MCF 10A (cell line): ENCODE measurements at regions of chr1 and their contacts with region 1.

Region 1: GRCh38 chr1:178542560-178543356 is 29.8 kb downstream of the TEX35 start:
- DNase-seq: peak; percentile 89
- H3K4me3 Mint-ChIP-seq: peak overlapping the region; percentile 95
- H3K27ac Mint-ChIP-seq: peak overlapping the region; percentile 80
- H3K4me1 Mint-ChIP-seq: peaks cover 35% of the 10 kb centered on the region
- H3K27me3 Mint-ChIP-seq: no peaks in the 10 kb centered on the region
- CTCF ChIP-seq: peak; percentile 100

Region 2: GRCh38 chr1:178513278-178514022 is 29.3 kb before region 1 on chr1:
- CTCF ChIA-PET with region 1: interaction called, 10 read pairs
- POLR2A ChIA-PET with region 1: interaction called, 3 read pairs
- intact Hi-C with region 1: no loop called
- DNase-seq: no peak
- H3K4me3 Mint-ChIP-seq: no peak overlapping the region
- H3K27ac Mint-ChIP-seq: no peak overlapping the region
- H3K4me1 Mint-ChIP-seq: no peaks in the 10 kb centered on the region
- H3K27me3 Mint-ChIP-seq: no peaks in the 10 kb centered on the region
- CTCF ChIP-seq: no peak

Region 3: GRCh38 chr1:178560871-178561376 is 18.2 kb after region 1 on chr1:
- CTCF ChIA-PET with region 1: interaction called, 19 read pairs
- POLR2A ChIA-PET with region 1: interaction called, 5 read pairs
- intact Hi-C with region 1: no loop called
- DNase-seq: no peak
- H3K4me3 Mint-ChIP-seq: no peak overlapping the region
- H3K27ac Mint-ChIP-seq: no peak overlapping the region
- H3K4me1 Mint-ChIP-seq: no peaks in the 10 kb centered on the region
- H3K27me3 Mint-ChIP-seq: no peaks in the 10 kb centered on the region
- CTCF ChIP-seq: no peak

Region 4: DNA sequence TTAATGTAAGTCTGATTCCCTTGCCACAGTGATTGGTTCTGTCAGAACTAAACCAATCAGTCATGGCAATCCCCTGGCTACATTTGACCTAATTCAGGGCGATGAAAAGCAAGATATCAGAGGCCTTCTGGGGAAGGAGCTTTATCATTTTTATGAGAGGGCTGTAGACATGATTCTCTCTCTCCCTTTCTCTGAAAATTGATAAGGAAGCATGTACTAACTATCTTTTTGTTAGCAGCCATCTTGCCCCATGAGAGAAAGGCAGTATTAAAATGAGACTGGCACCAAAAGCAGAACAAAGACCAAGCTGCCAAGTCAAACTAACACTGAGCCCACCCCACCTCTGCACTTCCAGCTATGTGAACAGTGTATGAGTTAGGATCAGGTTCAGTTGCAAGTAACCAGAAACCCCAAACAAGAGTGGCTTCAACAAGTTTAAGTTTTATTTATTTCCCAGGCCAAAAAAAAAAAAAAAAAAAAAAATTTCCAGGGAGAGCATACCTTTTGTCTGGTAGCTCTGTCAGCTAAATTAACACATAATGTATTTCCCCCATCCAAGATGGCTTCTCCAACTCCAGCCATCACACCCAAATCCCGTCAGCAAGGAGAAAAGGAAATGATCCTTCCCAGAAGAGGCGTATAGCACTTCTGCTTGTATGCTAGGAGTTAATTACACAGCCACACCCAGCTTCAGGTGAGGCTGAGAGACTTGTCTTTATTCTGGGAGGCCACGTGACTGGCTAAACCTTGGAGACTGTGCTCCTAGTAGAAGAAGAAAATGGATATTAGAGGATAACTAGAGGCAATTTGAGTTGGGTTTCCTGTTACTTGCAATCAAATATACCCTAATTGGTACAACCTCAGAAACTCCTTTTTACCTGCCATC is 76.5 kb after region 1 on chr1:
- CTCF ChIA-PET with region 1: interaction called, 10 read pairs
- POLR2A ChIA-PET with region 1: no interaction called
- intact Hi-C with region 1: no loop called
- DNase-seq: no peak
- H3K4me3 Mint-ChIP-seq: no peak overlapping the region
- H3K27ac Mint-ChIP-seq: no peak overlapping the region
- H3K4me1 Mint-ChIP-seq: no peaks in the 10 kb centered on the region
- H3K27me3 Mint-ChIP-seq: no peaks in the 10 kb centered on the region
- CTCF ChIP-seq: no peak

Region 5: GRCh38 chr1:178725603-178726517 is 183.1 kb after region 1 on chr1:
- CTCF ChIA-PET with region 1: interaction called, 84 read pairs
- POLR2A ChIA-PET with region 1: interaction called, 38 read pairs
- intact Hi-C with region 1: loop called (anchors 2 kb)
- DNase-seq: peak; percentile 98
- H3K4me3 Mint-ChIP-seq: peak overlapping the region; percentile 79
- H3K27ac Mint-ChIP-seq: peak overlapping the region; percentile 91
- H3K4me1 Mint-ChIP-seq: peaks cover 25% of the 10 kb centered on the region
- H3K27me3 Mint-ChIP-seq: no peaks in the 10 kb centered on the region
- CTCF ChIP-seq: peak; percentile 6

Region 6: DNA sequence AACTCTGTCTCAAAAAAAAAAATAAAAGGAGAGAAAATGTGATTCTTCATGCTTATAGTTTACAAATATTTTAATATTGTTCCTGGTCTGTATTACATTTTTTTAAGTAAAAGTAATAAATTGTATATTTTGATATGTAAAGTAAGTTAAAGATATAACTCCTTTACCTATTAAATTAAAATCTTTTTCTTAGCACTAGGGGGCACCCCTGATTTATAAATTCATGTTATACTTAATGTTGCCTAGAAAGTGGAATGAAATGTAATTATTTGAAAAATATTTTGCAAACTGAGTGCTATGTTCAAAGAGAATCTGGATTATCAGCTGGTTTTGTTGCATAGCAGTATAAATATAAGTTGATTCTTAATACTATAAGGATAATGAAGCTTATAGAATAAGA is 231.5 kb after region 1 on chr1:
- CTCF ChIA-PET with region 1: interaction called, 41 read pairs
- POLR2A ChIA-PET with region 1: interaction called, 3 read pairs
- intact Hi-C with region 1: loop called (anchors 1 kb)
- DNase-seq: peak; percentile 54
- H3K4me3 Mint-ChIP-seq: no peak overlapping the region
- H3K27ac Mint-ChIP-seq: no peak overlapping the region
- H3K4me1 Mint-ChIP-seq: no peaks in the 10 kb centered on the region
- H3K27me3 Mint-ChIP-seq: no peaks in the 10 kb centered on the region
- CTCF ChIP-seq: peak; percentile 55